ENCODE measurements at regions of chr10 and their contacts with region 1.

Region 1: GRCh38 chr10:110118891-110119621 is 88.3 kb upstream of the MXI1 start:
- DNase-seq: peak in 1 of 2 donors; percentile 28
- ATAC-seq: peak; percentile 82 to 95 (median 90)
- H3K4me3 ChIP-seq: no peak overlapping the region
- H3K27ac ChIP-seq: peak overlapping the region in 9 of 10 donors; percentile 1 to 88 (median 78)
- H3K4me1 ChIP-seq: peaks cover 0 to 19% (median 15%) of the 10 kb centered on the region in 9 donors
- H3K27me3 ChIP-seq: no peaks in the 10 kb centered on the region
- CTCF ChIP-seq: no peak

Region 2: GRCh38 chr10:109456566-109457301 is 662.3 kb before region 1 on chr10:
- intact Hi-C with region 1: no loop called
- DNase-seq: peak in 1 of 2 donors; percentile 3
- ATAC-seq: no peak
- H3K4me3 ChIP-seq: no peak overlapping the region
- H3K27ac ChIP-seq: no peak overlapping the region
- H3K4me1 ChIP-seq: no peaks in the 10 kb centered on the region
- H3K27me3 ChIP-seq: peaks cover 0 to 58% (median 37%) of the 10 kb centered on the region in 7 donors
- CTCF ChIP-seq: no peak

Region 3: GRCh38 chr10:109647627-109648026 is 471.4 kb before region 1 on chr10:
- intact Hi-C with region 1: no loop called
- DNase-seq: no peak
- ATAC-seq: no peak
- H3K4me3 ChIP-seq: no peak overlapping the region
- H3K27ac ChIP-seq: no peak overlapping the region
- H3K4me1 ChIP-seq: no peaks in the 10 kb centered on the region
- H3K27me3 ChIP-seq: no peaks in the 10 kb centered on the region
- CTCF ChIP-seq: no peak

Region 4: GRCh38 chr10:110052916-110053315 is 66.1 kb before region 1 on chr10:
- intact Hi-C with region 1: no loop called
- DNase-seq: no peak
- ATAC-seq: no peak
- H3K4me3 ChIP-seq: no peak overlapping the region
- H3K27ac ChIP-seq: no peak overlapping the region
- H3K4me1 ChIP-seq: peaks cover 0 to 68% (median 25%) of the 10 kb centered on the region in 9 donors
- H3K27me3 ChIP-seq: no peaks in the 10 kb centered on the region
- CTCF ChIP-seq: no peak

Region 5: GRCh38 chr10:110081911-110082310 is 37.1 kb before region 1 on chr10:
- intact Hi-C with region 1: loop called in 2 of 10 experiments (anchors 2 to 5 kb)
- DNase-seq: peak; percentile 19 to 35
- ATAC-seq: peak; percentile 67 to 86 (median 74)
- H3K4me3 ChIP-seq: no peak overlapping the region
- H3K27ac ChIP-seq: peak overlapping the region in 8 of 10 donors; percentile 47 to 84 (median 57)
- H3K4me1 ChIP-seq: peaks cover 2 to 81% (median 64%) of the 10 kb centered on the region in 9 donors
- H3K27me3 ChIP-seq: no peaks in the 10 kb centered on the region
- CTCF ChIP-seq: no peak

Measured in heart right ventricle (tissue), 16 donors.